SK-N-SH (cell line): ENCODE measurements at regions of chr14 and their contacts with region 1.

Region 1: GRCh38 chr14:105480952-105481801 is 5.5 kb upstream of the CRIP1 start:
- DNase-seq: peak; percentile 92
- H3K4me3 ChIP-seq: peak overlapping the region; percentile 39 to 56
- H3K27ac ChIP-seq: peak overlapping the region; percentile 98 to 100
- H3K4me1 ChIP-seq: peaks cover 43 to 80% of the 10 kb centered on the region in 2 experiments; a peak in 3 of 4 replicates
- H3K27me3 ChIP-seq: no peaks in the 10 kb centered on the region
- CTCF ChIP-seq: peak; percentile 96
- EP300 ChIP-seq: peak in 1 of 2 experiments; percentile 16; a peak in 1 of 4 replicates
- RAD21 ChIP-seq: peak; percentile 67

Region 2: DNA sequence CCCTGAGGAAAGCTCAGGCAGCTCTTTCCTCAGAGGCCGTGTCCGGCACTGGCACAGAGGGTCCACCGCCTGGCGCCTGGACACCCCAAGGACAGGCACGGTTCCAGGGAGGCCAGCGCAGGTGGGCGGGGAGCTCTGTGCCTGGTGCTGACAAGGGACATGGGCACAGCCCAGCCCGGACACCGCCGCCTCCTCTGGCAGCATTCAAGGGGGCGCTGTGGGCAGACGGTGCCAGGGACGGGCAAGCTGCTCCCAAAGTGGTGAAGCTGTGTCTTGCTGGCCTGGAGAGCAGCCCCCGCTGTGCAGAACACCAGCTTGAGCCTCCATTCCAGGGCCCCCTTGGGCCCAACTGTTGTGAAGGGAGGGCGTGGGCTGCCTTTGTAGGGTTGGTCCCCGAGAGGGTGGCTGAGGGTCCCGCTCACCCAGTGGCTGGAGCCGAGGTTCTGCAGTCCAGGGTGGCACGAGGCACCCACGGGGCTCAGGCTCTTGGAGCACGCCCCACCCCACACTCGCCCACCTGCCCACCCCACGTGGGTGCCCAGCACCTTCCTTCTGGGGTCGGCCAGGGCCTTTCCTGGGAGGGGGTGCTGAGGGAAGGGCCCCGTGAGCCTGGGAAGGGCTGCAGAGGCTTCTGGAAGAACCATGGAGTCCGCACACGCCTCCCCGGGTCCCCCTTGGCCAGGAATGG is 112.1 kb before region 1 on chr14:
- CTCF ChIA-PET with region 1: interaction called, 74 read pairs
- POLR2A ChIA-PET with region 1: no interaction called
- DNase-seq: no peak
- H3K4me3 ChIP-seq: no peak overlapping the region
- H3K27ac ChIP-seq: no peak overlapping the region
- H3K4me1 ChIP-seq: peaks cover 4 to 7% of the 10 kb centered on the region in 2 experiments; a peak in 2 of 4 replicates
- H3K27me3 ChIP-seq: no peaks in the 10 kb centered on the region
- CTCF ChIP-seq: no peak
- EP300 ChIP-seq: no peak
- RAD21 ChIP-seq: no peak

Region 3: GRCh38 chr14:105420101-105420923 is 60.9 kb before region 1 on chr14:
- CTCF ChIA-PET with region 1: interaction called, 18 read pairs
- POLR2A ChIA-PET with region 1: no interaction called
- DNase-seq: peak; percentile 76
- H3K4me3 ChIP-seq: peak overlapping the region; percentile 66 to 74
- H3K27ac ChIP-seq: peak overlapping the region in 1 of 2 experiments; percentile 87; a peak in 3 of 4 replicates
- H3K4me1 ChIP-seq: peaks cover 12 to 46% of the 10 kb centered on the region in 2 experiments; a peak in 3 of 4 replicates
- H3K27me3 ChIP-seq: no peaks in the 10 kb centered on the region
- CTCF ChIP-seq: no peak
- EP300 ChIP-seq: no peak
- RAD21 ChIP-seq: no peak

Region 4: GRCh38 chr14:105448706-105449111 is 32.5 kb before region 1 on chr14:
- CTCF ChIA-PET with region 1: interaction called, 35 read pairs
- POLR2A ChIA-PET with region 1: interaction called, 5 read pairs
- DNase-seq: peak; percentile 96
- H3K4me3 ChIP-seq: peak overlapping the region in 1 of 2 experiments; percentile 32; a peak in 1 of 4 replicates
- H3K27ac ChIP-seq: no peak overlapping the region; a peak in 2 of 4 replicates
- H3K4me1 ChIP-seq: peaks cover 0 to 23% of the 10 kb centered on the region in 2 experiments; a peak in 1 of 4 replicates
- H3K27me3 ChIP-seq: no peaks in the 10 kb centered on the region
- CTCF ChIP-seq: peak; percentile 75
- EP300 ChIP-seq: no peak
- RAD21 ChIP-seq: peak; percentile 69

Region 5: DNA sequence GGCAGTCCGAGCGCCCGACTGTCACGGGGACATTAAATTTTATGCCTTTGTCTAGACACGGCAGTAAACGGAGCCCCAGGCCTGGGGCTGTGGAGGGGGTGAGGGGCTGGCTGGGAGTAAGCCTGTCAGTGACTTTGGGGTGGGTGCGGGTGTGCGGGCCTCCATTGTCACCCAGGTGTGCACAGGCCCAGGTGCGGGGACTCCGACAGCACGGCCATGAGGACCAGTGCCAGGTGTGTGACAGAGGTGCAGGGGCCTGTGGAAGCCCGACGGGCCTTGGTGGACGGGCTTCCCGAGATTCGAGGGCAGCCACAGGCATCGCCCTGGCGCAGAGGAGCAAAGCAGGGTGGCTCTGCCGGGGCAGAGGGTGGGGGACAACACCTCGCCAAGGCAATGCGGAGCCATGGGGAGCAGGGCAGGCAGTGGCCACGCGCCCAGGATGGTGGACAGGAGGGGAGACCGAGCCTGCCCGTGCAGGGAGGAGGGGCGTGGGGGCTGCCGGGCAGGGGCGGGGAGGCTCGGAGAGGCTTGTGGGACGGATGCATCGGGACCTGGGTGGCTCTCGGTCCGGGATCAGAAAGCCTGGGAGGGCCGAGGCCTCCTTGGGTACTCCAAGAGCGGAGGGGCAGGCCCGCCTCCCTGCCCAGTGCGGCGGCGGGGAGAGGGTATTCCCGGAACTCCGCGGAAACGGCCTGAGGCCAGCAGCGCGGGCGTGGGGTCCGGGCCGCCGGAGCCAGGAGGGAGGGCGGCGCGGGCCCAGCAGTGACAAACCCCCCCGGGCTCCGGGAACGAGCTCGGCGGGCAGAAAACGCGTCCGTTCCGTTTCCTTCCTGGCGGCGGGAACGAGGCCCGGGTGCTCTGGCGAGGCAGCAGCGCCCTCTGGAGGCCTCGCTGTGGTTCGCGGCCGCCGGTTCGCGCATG is 46.7 kb after region 1 on chr14:
- CTCF ChIA-PET with region 1: interaction called, 43 read pairs
- POLR2A ChIA-PET with region 1: interaction called, 4 read pairs
- DNase-seq: peak; percentile 97
- H3K4me3 ChIP-seq: peak overlapping the region; percentile 64 to 69
- H3K27ac ChIP-seq: peak overlapping the region; percentile 27 to 53; a peak in 2 of 4 replicates
- H3K4me1 ChIP-seq: peaks cover 4 to 17% of the 10 kb centered on the region in 2 experiments; a peak in 2 of 4 replicates
- H3K27me3 ChIP-seq: no peaks in the 10 kb centered on the region
- CTCF ChIP-seq: peak; percentile 68
- EP300 ChIP-seq: no peak
- RAD21 ChIP-seq: peak; percentile 83